Activated CD4-positive, alpha-beta T cell treated with anti-CD3 and anti-CD28 coated beads for 36 hours (primary cell): ENCODE measurements at regions of chr16 and their contacts with region 1.

Region 1: DNA sequence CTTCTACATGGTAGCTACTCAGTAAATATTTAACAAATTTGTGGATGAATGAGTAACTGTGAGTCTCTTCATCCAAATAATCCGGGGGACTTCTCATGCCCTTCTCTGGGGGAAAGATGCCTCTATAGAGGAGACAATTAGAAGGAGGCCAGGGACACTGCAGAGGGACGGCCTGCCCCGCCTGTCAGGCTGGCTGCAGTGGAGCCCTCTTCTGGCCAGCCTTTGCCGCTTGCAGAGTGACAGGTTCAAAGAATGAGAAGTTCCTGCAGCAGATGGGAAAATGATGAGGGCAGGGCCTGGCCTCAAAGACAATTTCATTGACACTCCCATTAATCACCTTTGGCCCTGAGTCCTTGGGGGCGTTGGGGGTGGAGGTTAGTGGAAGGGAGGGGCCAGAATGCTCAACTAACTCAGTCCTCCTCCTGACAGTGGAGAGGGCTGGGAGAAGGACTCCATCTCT is 339.0 kb downstream of the MAF start:
- DNase-seq: peak; percentile 61
- ATAC-seq: peak; percentile 56
- H3K4me3 Mint-ChIP-seq: no peak overlapping the region
- H3K27ac Mint-ChIP-seq: peak overlapping the region; percentile 21
- H3K4me1 Mint-ChIP-seq: peaks cover 32% of the 10 kb centered on the region
- H3K27me3 Mint-ChIP-seq: peaks cover 22% of the 10 kb centered on the region

Region 2: GRCh38 chr16:78925083-78925767 is 336.3 kb before region 1 on chr16:
- CTCF ChIA-PET with region 1: no interaction called
- POLR2A ChIA-PET with region 1: no interaction called
- intact Hi-C with region 1: loop called in 1 of 2 experiments (anchors 10 kb)
- DNase-seq: peak; percentile 58
- ATAC-seq: peak; percentile 68
- H3K4me3 Mint-ChIP-seq: no peak overlapping the region
- H3K27ac Mint-ChIP-seq: no peak overlapping the region
- H3K4me1 Mint-ChIP-seq: peaks cover 14% of the 10 kb centered on the region
- H3K27me3 Mint-ChIP-seq: no peaks in the 10 kb centered on the region

Region 3: GRCh38 chr16:79158337-79158736 is 103.2 kb before region 1 on chr16:
- CTCF ChIA-PET with region 1: no interaction called
- POLR2A ChIA-PET with region 1: no interaction called
- intact Hi-C with region 1: loop called in 1 of 2 experiments (anchors 5 kb)
- DNase-seq: no peak
- ATAC-seq: no peak
- H3K4me3 Mint-ChIP-seq: no peak overlapping the region
- H3K27ac Mint-ChIP-seq: no peak overlapping the region
- H3K4me1 Mint-ChIP-seq: peaks cover 28% of the 10 kb centered on the region
- H3K27me3 Mint-ChIP-seq: peaks cover 5% of the 10 kb centered on the region

Region 4: DNA sequence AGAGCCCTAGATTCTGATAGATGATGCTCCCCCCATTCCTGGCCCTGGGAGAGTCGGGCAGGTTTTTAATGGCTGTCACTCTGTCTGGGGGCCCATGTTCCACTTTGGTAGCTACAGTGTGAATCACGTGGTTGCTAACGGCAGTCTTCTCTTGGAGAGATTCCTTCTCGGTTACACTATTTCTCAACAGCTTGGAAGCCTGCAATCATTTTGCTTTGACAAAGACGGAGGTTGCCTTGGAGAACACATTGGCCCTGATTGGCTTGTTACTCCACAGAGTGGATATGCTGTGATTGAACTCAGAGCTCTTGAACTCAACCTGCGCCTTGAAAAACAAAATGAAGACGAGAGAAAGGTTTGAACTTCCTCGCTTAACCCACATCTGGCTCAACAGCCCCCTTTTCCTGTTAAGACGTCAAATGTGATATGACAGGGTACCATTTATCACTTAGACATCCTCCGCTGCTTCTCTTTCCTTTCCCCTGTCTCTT is 120.1 kb after region 1 on chr16:
- CTCF ChIA-PET with region 1: no interaction called
- POLR2A ChIA-PET with region 1: no interaction called
- intact Hi-C with region 1: no loop called
- DNase-seq: no peak
- ATAC-seq: peak; percentile 33
- H3K4me3 Mint-ChIP-seq: no peak overlapping the region
- H3K27ac Mint-ChIP-seq: no peak overlapping the region
- H3K4me1 Mint-ChIP-seq: peaks cover 22% of the 10 kb centered on the region
- H3K27me3 Mint-ChIP-seq: peaks cover 4% of the 10 kb centered on the region